ENCODE measurements at regions of chrX and their contacts with region 1.

Region 1: DNA sequence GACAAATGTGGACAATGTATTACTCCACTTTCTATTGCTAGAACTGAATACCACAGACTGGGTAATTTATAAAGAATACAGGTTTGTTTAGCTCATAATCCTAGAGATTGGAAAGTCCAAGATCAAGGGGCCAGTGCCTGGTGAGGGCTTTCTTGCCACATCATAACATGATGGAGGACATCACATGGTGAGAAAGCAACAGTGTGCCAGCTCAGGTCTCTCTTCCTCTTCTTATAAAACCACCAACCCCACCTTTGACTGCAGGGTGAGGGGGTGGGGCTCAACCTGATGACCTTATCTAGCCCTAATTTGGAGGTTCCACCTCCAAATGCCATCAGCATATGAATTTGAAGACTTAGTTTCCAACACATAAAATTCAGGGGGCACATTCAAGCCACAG is 105.7 kb upstream of the CXorf66 start:
- DNase-seq: no peak
- H3K4me3 ChIP-seq: no peak overlapping the region
- H3K27ac ChIP-seq: no peak overlapping the region
- H3K4me1 ChIP-seq: no peaks in the 10 kb centered on the region
- H3K27me3 ChIP-seq: no peaks in the 10 kb centered on the region
- CTCF ChIP-seq: no peak

Region 2: DNA sequence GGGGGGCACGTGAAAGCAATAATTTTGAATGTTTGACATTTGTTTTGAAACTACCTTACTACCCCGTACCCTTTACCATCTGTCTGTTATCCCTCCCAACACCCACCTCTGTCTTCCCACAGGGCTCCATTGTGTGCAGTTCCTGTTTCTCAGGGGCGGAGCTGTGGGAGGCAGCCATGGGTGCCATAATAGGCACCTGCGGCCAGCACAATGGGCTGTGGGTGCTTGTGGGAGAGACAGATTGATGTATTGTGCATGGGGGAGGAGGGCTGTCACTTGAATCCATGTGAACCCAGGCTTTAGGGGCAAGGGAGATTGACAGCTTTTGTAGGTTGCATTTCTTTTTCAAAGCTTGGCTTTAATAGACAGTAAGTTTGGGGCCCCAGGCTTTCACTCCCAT is 16.8 kb after region 1 on chrX:
- CTCF ChIA-PET with region 1: no interaction called
- dilution Hi-C with region 1: no loop called
- in situ Hi-C with region 1: no loop called
- intact Hi-C with region 1: no loop called
- DNase-seq: no peak
- H3K4me3 ChIP-seq: no peak overlapping the region
- H3K27ac ChIP-seq: no peak overlapping the region
- H3K4me1 ChIP-seq: no peaks in the 10 kb centered on the region
- H3K27me3 ChIP-seq: peaks cover 12% of the 10 kb centered on the region
- CTCF ChIP-seq: no peak

Region 3: GRCh38 chrX:140132937-140133336 is 61.9 kb after region 1 on chrX:
- CTCF ChIA-PET with region 1: no interaction called
- dilution Hi-C with region 1: no loop called
- in situ Hi-C with region 1: loop called in 1 of 2 experiments (anchors 10 kb)
- intact Hi-C with region 1: loop called (anchors 5 kb)
- DNase-seq: no peak
- H3K4me3 ChIP-seq: no peak overlapping the region
- H3K27ac ChIP-seq: no peak overlapping the region
- H3K4me1 ChIP-seq: no peaks in the 10 kb centered on the region
- H3K27me3 ChIP-seq: no peaks in the 10 kb centered on the region
- CTCF ChIP-seq: no peak

Measured in mammary epithelial cell (primary cell).